CD4-positive, alpha-beta T cell (primary cell): ENCODE measurements at regions of chr14 and their contacts with region 1.

Region 1: GRCh38 chr14:103808403-103809001 is 38.9 kb downstream of the PPP1R13B start:
- DNase-seq: peak; percentile 45 to 82 (median 59)
- ATAC-seq: peak; percentile 88
- H3K4me3 ChIP-seq: no peak overlapping the region
- H3K4me3 Mint-ChIP-seq: no peak overlapping the region
- H3K27ac ChIP-seq: no peak overlapping the region
- H3K27ac Mint-ChIP-seq: no peak overlapping the region
- H3K4me1 ChIP-seq: no peaks in the 10 kb centered on the region
- H3K4me1 Mint-ChIP-seq: peaks cover 8% of the 10 kb centered on the region
- H3K27me3 ChIP-seq: no peaks in the 10 kb centered on the region
- H3K27me3 Mint-ChIP-seq: no peaks in the 10 kb centered on the region
- CTCF ChIP-seq: peak; percentile 84

Region 2: DNA sequence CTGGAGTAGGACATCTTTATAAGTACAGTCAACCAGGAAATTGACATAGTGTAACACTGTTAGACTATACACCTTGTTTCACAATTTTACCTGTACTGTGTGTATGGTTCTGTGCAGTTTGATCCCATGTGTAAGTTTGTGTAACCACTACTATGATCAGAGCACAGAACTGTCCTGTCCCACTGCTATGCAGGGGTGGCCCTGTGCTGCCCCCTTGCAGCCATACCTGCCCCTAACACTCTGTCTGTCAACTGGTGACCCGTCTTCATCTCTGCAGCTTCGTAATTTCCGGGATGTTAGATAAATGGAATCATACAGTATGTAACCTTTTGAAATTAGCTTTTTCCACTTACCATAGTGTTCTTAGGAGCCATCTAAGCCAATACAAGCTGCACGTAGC is 192.5 kb after region 1 on chr14:
- CTCF ChIA-PET with region 1: no interaction called
- POLR2A ChIA-PET with region 1: no interaction called
- intact Hi-C with region 1: loop called (anchors 2 to 10 kb)
- DNase-seq: peak in 8 of 14 experiments; percentile 1 to 31 (median 12)
- ATAC-seq: peak; percentile 44
- H3K4me3 ChIP-seq: no peak overlapping the region
- H3K4me3 Mint-ChIP-seq: no peak overlapping the region
- H3K27ac ChIP-seq: no peak overlapping the region
- H3K27ac Mint-ChIP-seq: no peak overlapping the region
- H3K4me1 ChIP-seq: no peaks in the 10 kb centered on the region
- H3K4me1 Mint-ChIP-seq: no peaks in the 10 kb centered on the region
- H3K27me3 ChIP-seq: peaks cover 0 to under 1% of the 10 kb centered on the region in 2 experiments
- H3K27me3 Mint-ChIP-seq: peaks cover 22% of the 10 kb centered on the region
- CTCF ChIP-seq: no peak

Region 3: DNA sequence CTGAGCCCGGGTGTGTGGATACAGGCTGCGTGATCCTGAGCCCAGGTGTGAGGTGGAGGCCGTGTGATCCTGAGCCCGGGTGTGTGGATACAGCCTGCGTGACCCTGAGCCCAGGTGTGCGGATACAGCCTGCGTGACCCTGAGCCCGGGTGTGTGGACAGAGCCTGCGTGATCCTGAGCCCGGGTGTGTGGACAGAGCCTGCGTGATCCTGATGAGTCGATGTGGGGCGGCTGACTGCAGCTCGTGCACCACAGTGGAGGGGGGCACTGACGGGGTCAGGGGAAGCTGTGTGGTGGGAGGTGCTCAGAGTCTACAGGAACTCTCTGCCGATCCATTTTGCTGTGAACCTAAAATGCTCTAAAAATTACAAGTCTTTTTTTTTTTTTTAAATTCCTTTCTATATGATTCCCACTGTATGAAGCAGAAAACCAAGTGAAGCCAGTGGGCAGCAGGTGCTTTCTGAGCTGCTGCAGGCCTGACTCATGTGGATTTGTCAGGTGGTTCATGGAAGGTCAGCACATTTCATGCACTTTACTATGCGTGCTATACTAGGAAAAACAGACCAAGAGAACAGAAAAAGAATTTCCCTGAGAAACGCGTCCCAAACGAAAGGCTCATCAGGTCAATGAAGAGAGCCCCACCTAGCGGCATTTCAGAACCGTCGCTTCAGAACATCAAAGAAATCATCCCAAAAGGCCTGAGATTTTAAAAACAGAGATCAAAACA is 1473.0 kb after region 1 on chr14:
- CTCF ChIA-PET with region 1: no interaction called
- POLR2A ChIA-PET with region 1: no interaction called
- intact Hi-C with region 1: no loop called
- DNase-seq: peak in 4 of 14 experiments; percentile 43 to 67 (median 57)
- ATAC-seq: no peak
- H3K4me3 ChIP-seq: no peak overlapping the region
- H3K4me3 Mint-ChIP-seq: no peak overlapping the region
- H3K27ac ChIP-seq: no peak overlapping the region
- H3K27ac Mint-ChIP-seq: no peak overlapping the region
- H3K4me1 ChIP-seq: peaks cover 23% of the 10 kb centered on the region
- H3K4me1 Mint-ChIP-seq: peaks cover 36% of the 10 kb centered on the region
- H3K27me3 ChIP-seq: no peaks in the 10 kb centered on the region
- H3K27me3 Mint-ChIP-seq: no peaks in the 10 kb centered on the region
- CTCF ChIP-seq: peak; percentile 59